ENCODE measurements at regions of chr3 and their contacts with region 1.

Region 1: DNA sequence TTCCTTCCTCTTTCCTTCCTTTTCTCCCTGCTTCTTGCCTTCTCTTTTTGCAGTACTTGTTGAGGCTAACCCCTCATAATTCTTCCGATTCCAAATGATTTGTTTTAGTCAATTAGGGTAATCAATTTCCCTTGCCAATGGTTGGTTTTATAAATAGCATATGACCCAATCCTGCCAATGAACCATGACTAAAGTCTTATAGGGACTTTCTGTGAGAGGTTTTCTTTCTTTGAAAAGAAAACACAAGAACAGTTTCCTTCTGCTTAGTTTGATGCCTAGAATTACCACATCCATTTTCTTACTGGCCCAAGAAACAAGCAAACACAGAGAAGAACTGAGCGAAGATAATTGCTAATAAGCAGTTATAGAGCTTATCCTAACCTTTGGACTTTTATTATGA is 292.5 kb upstream of the SATB1 start:
- DNase-seq: no peak
- ATAC-seq: peak; percentile 44
- H3K4me3 Mint-ChIP-seq: peak overlapping the region; percentile 75
- H3K27ac Mint-ChIP-seq: peak overlapping the region; percentile 95
- H3K4me1 Mint-ChIP-seq: peaks cover 59% of the 10 kb centered on the region
- H3K27me3 Mint-ChIP-seq: no peaks in the 10 kb centered on the region

Region 2: GRCh38 chr3:18431266-18431665 is 286.3 kb before region 1 on chr3:
- POLR2A ChIA-PET with region 1: interaction called, 12 read pairs
- DNase-seq: no peak
- ATAC-seq: no peak
- H3K4me3 Mint-ChIP-seq: peak overlapping the region; percentile 88
- H3K27ac Mint-ChIP-seq: peak overlapping the region; percentile 87
- H3K4me1 Mint-ChIP-seq: peaks cover 67% of the 10 kb centered on the region
- H3K27me3 Mint-ChIP-seq: no peaks in the 10 kb centered on the region

Region 3: GRCh38 chr3:18438586-18438985 is 279.0 kb before region 1 on chr3:
- POLR2A ChIA-PET with region 1: interaction called, 65 read pairs
- DNase-seq: peak; percentile 72
- ATAC-seq: peak; percentile 83
- H3K4me3 Mint-ChIP-seq: peak overlapping the region; percentile 89
- H3K27ac Mint-ChIP-seq: peak overlapping the region; percentile 93
- H3K4me1 Mint-ChIP-seq: peaks cover 43% of the 10 kb centered on the region
- H3K27me3 Mint-ChIP-seq: no peaks in the 10 kb centered on the region

Region 4: GRCh38 chr3:18740631-18741583 is 23.3 kb after region 1 on chr3:
- POLR2A ChIA-PET with region 1: interaction called, 80 read pairs
- DNase-seq: no peak
- ATAC-seq: peak; percentile 48
- H3K4me3 Mint-ChIP-seq: peak overlapping the region; percentile 77
- H3K27ac Mint-ChIP-seq: peak overlapping the region; percentile 96
- H3K4me1 Mint-ChIP-seq: peaks cover 77% of the 10 kb centered on the region
- H3K27me3 Mint-ChIP-seq: no peaks in the 10 kb centered on the region

Region 5: GRCh38 chr3:18766974-18767373 is 49.4 kb after region 1 on chr3:
- POLR2A ChIA-PET with region 1: no interaction called
- DNase-seq: no peak
- ATAC-seq: no peak
- H3K4me3 Mint-ChIP-seq: no peak overlapping the region
- H3K27ac Mint-ChIP-seq: no peak overlapping the region
- H3K4me1 Mint-ChIP-seq: peaks cover 15% of the 10 kb centered on the region
- H3K27me3 Mint-ChIP-seq: no peaks in the 10 kb centered on the region